CD14-positive monocyte (primary cell): ENCODE measurements at regions of chr22 and their contacts with region 1.

Region 1: GRCh38 chr22:40818747-40819598 is at the start of gene SLC25A17:
- DNase-seq: peak; percentile 71 to 75 (median 73)
- H3K4me3 ChIP-seq: peak within 1 kb of the TSS; percentile 89 to 100 (median 94)
- H3K4me3 Mint-ChIP-seq: peak within 1 kb of the TSS; percentile 97 to 98
- H3K27ac ChIP-seq: peak within 1 kb of the TSS; percentile 11 to 90
- H3K27ac Mint-ChIP-seq: peak within 1 kb of the TSS; percentile 84 to 97 (median 91)
- H3K4me1 ChIP-seq: peaks cover 25 to 31% of the 10 kb centered on the region in 2 donors
- H3K4me1 Mint-ChIP-seq: peaks cover 26% of the 10 kb centered on the region
- H3K27me3 ChIP-seq: no peaks in the 10 kb centered on the region
- H3K27me3 Mint-ChIP-seq: peaks cover 0 to 2% (median 0%) of the 10 kb centered on the region in 3 donors
- CTCF ChIP-seq: peak; percentile 52
- polyA plus RNA-seq, gene SLC25A17: 7.3 to 10.6 (median 8.8) TPM

Region 2: DNA sequence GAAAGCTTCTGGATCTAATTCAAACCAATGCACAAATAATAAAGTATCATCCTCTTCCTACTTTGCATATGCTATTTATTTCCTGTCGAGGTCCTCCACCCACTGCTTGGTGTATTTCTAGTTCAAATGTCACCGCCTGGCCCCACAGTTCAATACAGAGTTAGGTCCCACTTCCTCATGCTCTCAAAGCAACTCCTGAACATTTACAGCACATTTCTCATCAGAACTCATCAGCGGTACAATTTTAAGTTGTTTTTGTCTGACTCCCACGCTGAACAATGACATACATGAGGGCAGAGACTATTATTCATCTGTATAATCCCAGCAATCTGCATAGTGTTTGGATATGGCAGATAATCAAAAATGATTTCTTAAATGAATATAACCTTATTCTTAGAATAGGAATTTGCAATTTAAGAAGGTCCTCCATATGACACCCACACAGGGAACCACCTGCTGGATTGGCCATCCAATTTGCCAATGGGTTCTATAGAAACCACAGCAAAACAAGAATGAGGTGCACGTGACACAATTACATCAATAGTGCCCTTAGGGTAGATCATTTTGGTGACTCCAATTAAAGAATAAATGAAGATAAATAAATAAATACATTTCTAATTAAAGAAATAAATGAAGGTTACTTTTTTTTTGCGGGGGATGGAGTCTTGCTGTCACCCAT is 54.1 kb before region 1 on chr22:
- intact Hi-C with region 1: no loop called
- DNase-seq: no peak
- H3K4me3 ChIP-seq: no peak overlapping the region
- H3K4me3 Mint-ChIP-seq: no peak overlapping the region
- H3K27ac ChIP-seq: no peak overlapping the region
- H3K27ac Mint-ChIP-seq: peak overlapping the region in 1 of 7 donors; percentile 42
- H3K4me1 ChIP-seq: no peaks in the 10 kb centered on the region
- H3K4me1 Mint-ChIP-seq: peaks cover 4% of the 10 kb centered on the region
- H3K27me3 ChIP-seq: no peaks in the 10 kb centered on the region
- H3K27me3 Mint-ChIP-seq: peaks cover 0 to 1% (median 0%) of the 10 kb centered on the region in 3 donors
- CTCF ChIP-seq: no peak

Region 3: GRCh38 chr22:40856513-40857308 is 37.7 kb after region 1 on chr22 and contains the starts of genes ST13 and XPNPEP3:
- intact Hi-C with region 1: loop called (anchors 5 kb)
- DNase-seq: peak; percentile 92 to 96 (median 94)
- H3K4me3 ChIP-seq: peak within 1 kb of the TSS; percentile 87 to 98 (median 89)
- H3K4me3 Mint-ChIP-seq: peak within 1 kb of the TSS; percentile 97 to 99
- H3K27ac ChIP-seq: peak within 1 kb of the TSS; percentile 95 to 97
- H3K27ac Mint-ChIP-seq: peak within 1 kb of the TSS; percentile 100
- H3K4me1 ChIP-seq: peaks cover 18 to 28% of the 10 kb centered on the region in 2 donors
- H3K4me1 Mint-ChIP-seq: peaks cover 22% of the 10 kb centered on the region
- H3K27me3 ChIP-seq: no peaks in the 10 kb centered on the region
- H3K27me3 Mint-ChIP-seq: no peaks in the 10 kb centered on the region
- CTCF ChIP-seq: no peak
- polyA plus RNA-seq, gene ST13: 56.1 to 81.3 (median 67.2) TPM
- polyA plus RNA-seq, gene XPNPEP3: 3.6 to 9.4 (median 7.3) TPM

Region 4: GRCh38 chr22:40898850-40899357 is 79.9 kb after region 1 on chr22:
- intact Hi-C with region 1: loop called in 1 of 2 experiments (anchors 10 kb)
- DNase-seq: peak; percentile 24 to 55 (median 51)
- H3K4me3 ChIP-seq: peak overlapping the region in 1 of 3 experiments; percentile 21
- H3K4me3 Mint-ChIP-seq: peak overlapping the region in 1 of 2 donors; percentile 60
- H3K27ac ChIP-seq: no peak overlapping the region
- H3K27ac Mint-ChIP-seq: no peak overlapping the region
- H3K4me1 ChIP-seq: no peaks in the 10 kb centered on the region
- H3K4me1 Mint-ChIP-seq: peaks cover 5% of the 10 kb centered on the region
- H3K27me3 ChIP-seq: no peaks in the 10 kb centered on the region
- H3K27me3 Mint-ChIP-seq: peaks cover 0 to 2% (median 0%) of the 10 kb centered on the region in 3 donors
- CTCF ChIP-seq: peak; percentile 60